Naive thymus-derived CD4-positive, alpha-beta T cell (primary cell): ENCODE measurements at regions of chr19 and their contacts with region 1.

Region 1: DNA sequence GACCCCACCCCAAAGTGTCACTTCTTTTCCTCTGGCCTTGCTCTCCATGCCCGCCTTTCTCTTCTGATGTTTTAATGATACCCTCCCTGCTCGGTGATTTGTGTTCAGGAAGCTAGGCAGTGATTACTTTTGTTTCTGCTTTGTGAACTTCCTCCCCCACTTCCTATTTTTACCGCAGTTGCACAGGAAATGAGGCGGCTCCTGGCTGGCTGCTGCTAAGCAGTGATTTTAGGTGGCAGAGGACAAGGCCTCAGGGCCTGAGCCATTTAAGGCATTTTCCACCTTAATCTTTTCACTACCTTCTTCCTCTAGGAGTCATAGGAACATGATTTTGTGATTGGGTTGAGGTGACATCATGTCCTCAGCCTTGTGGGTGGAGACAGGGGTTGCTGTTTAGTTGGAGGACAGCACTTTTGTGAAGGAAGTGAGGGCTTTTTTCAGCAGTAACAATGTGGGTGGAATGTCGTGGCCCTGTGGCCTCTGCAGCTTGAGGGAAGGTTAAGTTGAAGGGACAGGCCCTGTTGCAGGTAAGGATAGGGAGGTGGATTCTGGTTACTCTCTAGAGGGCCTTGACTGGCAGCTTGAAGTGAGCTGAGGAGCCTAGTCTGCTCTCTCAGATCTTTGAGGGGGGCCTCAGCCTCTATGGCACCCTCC is 15.7 kb downstream of the GARRE1 start:
- DNase-seq: peak; percentile 33 to 93 (median 91)
- ATAC-seq: peak; percentile 95
- H3K4me3 ChIP-seq: peak overlapping the region; percentile 28
- H3K4me3 Mint-ChIP-seq: peak overlapping the region; percentile 47 to 87 (median 76)
- H3K27ac ChIP-seq: peak overlapping the region; percentile 84
- H3K27ac Mint-ChIP-seq: peak overlapping the region; percentile 81 to 99 (median 98)
- H3K4me1 ChIP-seq: peaks cover 37 to 72% of the 10 kb centered on the region in 2 donors
- H3K4me1 Mint-ChIP-seq: peaks cover 32 to 90% (median 84%) of the 10 kb centered on the region in 7 donors
- H3K27me3 ChIP-seq: no peaks in the 10 kb centered on the region
- H3K27me3 Mint-ChIP-seq: no peaks in the 10 kb centered on the region

Region 2: DNA sequence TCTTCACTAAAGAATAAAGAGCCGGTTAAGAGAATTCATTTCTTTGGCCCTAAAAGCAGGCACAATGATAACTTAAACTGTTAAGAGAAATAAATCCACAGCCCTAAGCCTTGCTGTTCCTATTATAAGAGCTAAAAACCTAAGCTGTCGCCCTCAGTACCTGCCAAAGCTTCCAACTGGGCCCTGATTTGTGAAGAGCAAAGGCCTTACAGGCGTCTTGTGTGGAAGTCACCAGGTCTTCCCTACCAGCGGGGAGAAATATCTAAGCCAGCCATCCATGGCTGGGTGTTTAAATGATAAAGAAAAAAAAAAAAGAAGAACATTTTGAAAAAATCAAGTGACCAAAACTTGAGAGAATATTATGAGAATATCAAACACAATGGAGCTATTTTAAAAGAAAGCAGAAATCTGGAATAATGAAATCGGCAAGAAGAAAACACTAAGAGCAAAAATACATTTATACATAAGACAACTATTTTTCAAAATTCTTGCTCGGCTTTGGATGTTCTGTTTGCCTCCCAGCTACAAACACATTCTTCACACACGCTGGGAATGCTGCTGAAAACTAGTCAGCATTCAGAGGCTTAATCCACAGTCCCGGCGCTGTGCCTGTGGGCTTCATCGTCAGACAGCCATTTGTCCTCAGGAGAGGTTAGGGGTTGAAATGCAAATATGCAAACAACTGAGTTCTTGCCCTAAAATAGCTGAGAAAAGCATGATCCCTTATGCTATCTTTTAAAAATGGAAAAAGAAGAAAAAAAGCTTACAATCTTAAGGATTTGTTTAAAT is 187.6 kb before region 1 on chr19:
- CTCF ChIA-PET with region 1: no interaction called
- POLR2A ChIA-PET with region 1: no interaction called
- intact Hi-C with region 1: no loop called
- DNase-seq: no peak
- ATAC-seq: no peak
- H3K4me3 ChIP-seq: no peak overlapping the region
- H3K4me3 Mint-ChIP-seq: no peak overlapping the region
- H3K27ac ChIP-seq: no peak overlapping the region
- H3K27ac Mint-ChIP-seq: no peak overlapping the region
- H3K4me1 ChIP-seq: no peaks in the 10 kb centered on the region
- H3K4me1 Mint-ChIP-seq: no peaks in the 10 kb centered on the region
- H3K27me3 ChIP-seq: no peaks in the 10 kb centered on the region
- H3K27me3 Mint-ChIP-seq: peaks cover 0 to 32% (median 10%) of the 10 kb centered on the region in 5 donors

Region 3: GRCh38 chr19:34134190-34135053 is 135.7 kb before region 1 on chr19:
- CTCF ChIA-PET with region 1: no interaction called
- POLR2A ChIA-PET with region 1: no interaction called
- intact Hi-C with region 1: no loop called
- DNase-seq: peak; percentile 79 to 92 (median 87)
- ATAC-seq: peak; percentile 99
- H3K4me3 ChIP-seq: peak overlapping the region; percentile 91
- H3K4me3 Mint-ChIP-seq: peak overlapping the region; percentile 94 to 97 (median 95)
- H3K27ac ChIP-seq: peak overlapping the region; percentile 91
- H3K27ac Mint-ChIP-seq: peak overlapping the region; percentile 90 to 96 (median 91)
- H3K4me1 ChIP-seq: peaks cover 0 to 7% of the 10 kb centered on the region in 2 donors
- H3K4me1 Mint-ChIP-seq: peaks cover 3 to 11% (median 8%) of the 10 kb centered on the region in 7 donors
- H3K27me3 ChIP-seq: no peaks in the 10 kb centered on the region
- H3K27me3 Mint-ChIP-seq: peaks cover 0 to 3% (median 0%) of the 10 kb centered on the region in 5 donors

Region 4: GRCh38 chr19:34184880-34185491 is 85.1 kb before region 1 on chr19:
- CTCF ChIA-PET with region 1: no interaction called
- POLR2A ChIA-PET with region 1: no interaction called
- intact Hi-C with region 1: no loop called
- DNase-seq: no peak
- ATAC-seq: peak; percentile 77
- H3K4me3 ChIP-seq: no peak overlapping the region
- H3K4me3 Mint-ChIP-seq: peak overlapping the region; percentile 4 to 93 (median 63)
- H3K27ac ChIP-seq: peak overlapping the region; percentile 18
- H3K27ac Mint-ChIP-seq: peak overlapping the region; percentile 6 to 83 (median 56)
- H3K4me1 ChIP-seq: peaks cover 56 to 62% of the 10 kb centered on the region in 2 donors
- H3K4me1 Mint-ChIP-seq: peaks cover 53 to 96% (median 89%) of the 10 kb centered on the region in 7 donors
- H3K27me3 ChIP-seq: no peaks in the 10 kb centered on the region
- H3K27me3 Mint-ChIP-seq: no peaks in the 10 kb centered on the region

Region 5: DNA sequence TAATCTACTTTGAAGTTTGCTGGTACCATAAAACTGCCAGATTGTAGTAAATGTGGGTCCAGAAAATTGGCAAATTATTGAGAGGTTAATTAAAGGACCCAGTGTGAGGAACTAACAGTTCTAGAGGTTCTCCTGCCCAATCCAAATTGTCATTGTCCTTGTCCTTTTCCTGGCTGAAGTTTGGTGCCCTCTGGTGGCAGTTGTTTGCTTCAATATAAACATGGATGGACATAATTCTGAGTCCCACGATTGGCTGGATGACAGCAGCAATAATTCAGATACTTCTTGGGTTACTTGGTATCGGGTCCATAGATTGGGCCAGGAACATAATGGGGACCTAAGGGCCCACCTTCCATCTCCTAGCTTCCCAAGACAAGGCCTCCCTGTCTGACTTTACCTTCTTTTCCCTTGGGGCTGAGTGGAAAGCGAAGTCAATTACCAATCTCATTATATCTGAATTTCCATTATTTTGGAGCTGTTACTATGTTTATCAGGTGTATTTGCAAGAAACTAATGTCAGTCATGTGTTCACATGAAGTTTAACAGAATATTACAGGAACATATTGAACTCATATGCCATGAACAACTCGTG is 49.5 kb before region 1 on chr19:
- CTCF ChIA-PET with region 1: no interaction called
- POLR2A ChIA-PET with region 1: interaction called, 4 read pairs
- intact Hi-C with region 1: loop called in 1 of 2 experiments (anchors 1 kb)
- DNase-seq: peak; percentile 21 to 58 (median 47)
- ATAC-seq: no peak
- H3K4me3 ChIP-seq: no peak overlapping the region
- H3K4me3 Mint-ChIP-seq: peak overlapping the region in 4 of 10 donors; percentile 3 to 29 (median 10)
- H3K27ac ChIP-seq: no peak overlapping the region
- H3K27ac Mint-ChIP-seq: peak overlapping the region in 8 of 9 donors; percentile 31 to 89 (median 76)
- H3K4me1 ChIP-seq: peaks cover 19 to 24% of the 10 kb centered on the region in 2 donors
- H3K4me1 Mint-ChIP-seq: peaks cover 23 to 79% (median 58%) of the 10 kb centered on the region in 7 donors
- H3K27me3 ChIP-seq: no peaks in the 10 kb centered on the region
- H3K27me3 Mint-ChIP-seq: no peaks in the 10 kb centered on the region

Region 6: GRCh38 chr19:34282611-34283519 is 12.8 kb after region 1 on chr19:
- CTCF ChIA-PET with region 1: interaction called, 3 read pairs
- POLR2A ChIA-PET with region 1: interaction called, 11 read pairs
- intact Hi-C with region 1: no loop called
- DNase-seq: no peak
- ATAC-seq: no peak
- H3K4me3 ChIP-seq: no peak overlapping the region
- H3K4me3 Mint-ChIP-seq: peak overlapping the region in 3 of 10 donors; percentile 17 to 44 (median 37)
- H3K27ac ChIP-seq: no peak overlapping the region
- H3K27ac Mint-ChIP-seq: peak overlapping the region in 7 of 9 donors; percentile 5 to 72 (median 34)
- H3K4me1 ChIP-seq: peaks cover 0 to 11% of the 10 kb centered on the region in 2 donors
- H3K4me1 Mint-ChIP-seq: peaks cover 8 to 65% (median 53%) of the 10 kb centered on the region in 7 donors
- H3K27me3 ChIP-seq: no peaks in the 10 kb centered on the region
- H3K27me3 Mint-ChIP-seq: no peaks in the 10 kb centered on the region

Region 7: DNA sequence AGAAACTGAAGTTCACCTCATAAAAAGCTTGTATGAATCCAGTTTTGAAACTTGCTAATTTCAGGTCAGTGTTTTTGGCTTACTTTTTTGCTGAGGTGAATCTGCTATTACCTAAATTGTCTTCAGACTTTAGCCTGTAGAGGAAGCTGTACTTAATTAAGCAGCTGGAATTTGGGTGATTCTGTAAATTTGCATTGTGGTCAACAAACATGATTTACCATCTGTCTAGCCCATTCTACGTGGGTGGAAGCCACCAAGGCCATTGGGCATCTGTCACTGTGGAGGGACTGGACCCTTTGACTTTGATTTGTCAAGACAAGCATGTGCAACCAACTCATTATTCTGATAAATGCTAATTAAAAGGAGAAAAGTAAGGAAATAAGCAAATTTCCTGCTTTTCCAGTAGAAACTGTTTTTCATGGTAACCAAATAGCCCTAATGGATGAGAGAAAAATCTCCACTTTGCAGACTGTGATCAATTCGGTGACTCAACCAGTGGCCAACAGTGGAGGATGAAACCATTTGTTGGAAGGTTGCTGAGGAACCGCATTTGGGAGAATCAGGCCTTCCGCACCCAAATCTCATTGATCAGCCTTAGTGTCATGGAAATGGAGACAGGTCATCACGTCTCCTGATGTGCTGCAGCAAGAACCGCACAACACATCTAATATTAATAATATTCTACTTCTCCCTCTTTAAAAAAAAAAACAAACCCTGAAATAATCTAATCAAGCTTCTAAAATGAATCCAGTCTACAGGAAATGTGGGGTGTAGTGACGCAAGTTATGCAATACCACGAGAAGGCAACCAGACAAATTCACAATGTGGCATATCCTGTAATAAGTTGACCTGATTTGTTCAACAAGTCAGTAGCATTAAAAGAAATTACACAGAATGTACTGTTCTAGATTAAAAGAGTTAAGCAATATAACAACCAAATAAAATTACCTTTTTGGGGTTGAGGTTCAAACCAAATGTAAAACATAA is 38.6 kb after region 1 on chr19:
- CTCF ChIA-PET with region 1: no interaction called
- POLR2A ChIA-PET with region 1: interaction called, 4 read pairs
- intact Hi-C with region 1: loop called in 1 of 2 experiments (anchors 2 kb)
- DNase-seq: peak in 7 of 9 donors; percentile 53 to 85 (median 78)
- ATAC-seq: peak; percentile 88
- H3K4me3 ChIP-seq: no peak overlapping the region
- H3K4me3 Mint-ChIP-seq: peak overlapping the region in 9 of 10 donors; percentile 12 to 87 (median 62)
- H3K27ac ChIP-seq: peak overlapping the region; percentile 52
- H3K27ac Mint-ChIP-seq: peak overlapping the region in 8 of 9 donors; percentile 78 to 99 (median 96)
- H3K4me1 ChIP-seq: peaks cover 8 to 36% of the 10 kb centered on the region in 2 donors
- H3K4me1 Mint-ChIP-seq: peaks cover 15 to 79% (median 74%) of the 10 kb centered on the region in 7 donors
- H3K27me3 ChIP-seq: no peaks in the 10 kb centered on the region
- H3K27me3 Mint-ChIP-seq: no peaks in the 10 kb centered on the region

Region 8: GRCh38 chr19:34336781-34337271 is 66.7 kb after region 1 on chr19:
- CTCF ChIA-PET with region 1: interaction called, 3 read pairs
- POLR2A ChIA-PET with region 1: interaction called, 5 read pairs
- intact Hi-C with region 1: loop called in 1 of 2 experiments (anchors 2 kb)
- DNase-seq: peak in 7 of 9 donors; percentile 34 to 65 (median 60)
- ATAC-seq: peak; percentile 72
- H3K4me3 ChIP-seq: no peak overlapping the region
- H3K4me3 Mint-ChIP-seq: no peak overlapping the region
- H3K27ac ChIP-seq: no peak overlapping the region
- H3K27ac Mint-ChIP-seq: peak overlapping the region in 8 of 9 donors; percentile 25 to 86 (median 55)
- H3K4me1 ChIP-seq: peaks cover 0 to 10% of the 10 kb centered on the region in 2 donors
- H3K4me1 Mint-ChIP-seq: peaks cover 3 to 16% (median 9%) of the 10 kb centered on the region in 7 donors
- H3K27me3 ChIP-seq: no peaks in the 10 kb centered on the region
- H3K27me3 Mint-ChIP-seq: no peaks in the 10 kb centered on the region

Region 9: DNA sequence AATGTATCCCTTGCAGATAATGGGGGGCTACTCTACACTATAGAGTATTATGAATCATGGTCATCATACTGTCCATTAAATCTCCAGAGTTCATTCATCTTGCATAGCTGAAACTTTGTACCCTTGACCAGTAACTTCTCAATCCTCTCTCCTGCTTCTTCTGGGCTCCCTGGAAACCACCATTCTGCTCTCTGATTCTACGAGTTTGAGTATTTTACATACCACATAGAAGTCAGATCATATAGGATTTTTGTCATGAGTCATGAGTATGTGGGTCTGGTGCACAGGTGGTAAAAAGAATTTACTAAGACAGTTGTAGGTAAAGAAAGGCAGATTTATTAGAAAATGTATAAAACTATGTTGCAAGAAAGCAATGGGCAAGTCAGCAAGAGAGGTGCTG is 253.3 kb after region 1 on chr19:
- CTCF ChIA-PET with region 1: no interaction called
- POLR2A ChIA-PET with region 1: no interaction called
- intact Hi-C with region 1: no loop called
- DNase-seq: no peak
- ATAC-seq: no peak
- H3K4me3 ChIP-seq: no peak overlapping the region
- H3K4me3 Mint-ChIP-seq: no peak overlapping the region
- H3K27ac ChIP-seq: no peak overlapping the region
- H3K27ac Mint-ChIP-seq: no peak overlapping the region
- H3K4me1 ChIP-seq: no peaks in the 10 kb centered on the region
- H3K4me1 Mint-ChIP-seq: no peaks in the 10 kb centered on the region
- H3K27me3 ChIP-seq: no peaks in the 10 kb centered on the region
- H3K27me3 Mint-ChIP-seq: peaks cover 8 to 50% (median 41%) of the 10 kb centered on the region in 5 donors